Activated naive CD4-positive, alpha-beta T cell treated with anti-CD3 and anti-CD28 coated beads, Interleukin-2, amount 10 ng/mL, durations not matched to agents 7 days and 5 days (primary cell): ENCODE measurements at regions of chr15 and their contacts with region 1.

Region 1: GRCh38 chr15:78108299-78109084 is 16.1 kb downstream of the SH2D7 start:
- DNase-seq: peak; percentile 91
- H3K4me3 Mint-ChIP-seq: no peak overlapping the region
- H3K27ac Mint-ChIP-seq: no peak overlapping the region
- H3K4me1 Mint-ChIP-seq: peaks cover 58% of the 10 kb centered on the region
- H3K27me3 Mint-ChIP-seq: no peaks in the 10 kb centered on the region

Region 2: GRCh38 chr15:77907824-77908751 is 200.4 kb before region 1 on chr15:
- CTCF ChIA-PET with region 1: interaction called, 17 read pairs
- DNase-seq: peak; percentile 81
- H3K4me3 Mint-ChIP-seq: no peak overlapping the region
- H3K27ac Mint-ChIP-seq: no peak overlapping the region
- H3K4me1 Mint-ChIP-seq: peaks cover 3% of the 10 kb centered on the region
- H3K27me3 Mint-ChIP-seq: peaks cover 43% of the 10 kb centered on the region

Region 3: DNA sequence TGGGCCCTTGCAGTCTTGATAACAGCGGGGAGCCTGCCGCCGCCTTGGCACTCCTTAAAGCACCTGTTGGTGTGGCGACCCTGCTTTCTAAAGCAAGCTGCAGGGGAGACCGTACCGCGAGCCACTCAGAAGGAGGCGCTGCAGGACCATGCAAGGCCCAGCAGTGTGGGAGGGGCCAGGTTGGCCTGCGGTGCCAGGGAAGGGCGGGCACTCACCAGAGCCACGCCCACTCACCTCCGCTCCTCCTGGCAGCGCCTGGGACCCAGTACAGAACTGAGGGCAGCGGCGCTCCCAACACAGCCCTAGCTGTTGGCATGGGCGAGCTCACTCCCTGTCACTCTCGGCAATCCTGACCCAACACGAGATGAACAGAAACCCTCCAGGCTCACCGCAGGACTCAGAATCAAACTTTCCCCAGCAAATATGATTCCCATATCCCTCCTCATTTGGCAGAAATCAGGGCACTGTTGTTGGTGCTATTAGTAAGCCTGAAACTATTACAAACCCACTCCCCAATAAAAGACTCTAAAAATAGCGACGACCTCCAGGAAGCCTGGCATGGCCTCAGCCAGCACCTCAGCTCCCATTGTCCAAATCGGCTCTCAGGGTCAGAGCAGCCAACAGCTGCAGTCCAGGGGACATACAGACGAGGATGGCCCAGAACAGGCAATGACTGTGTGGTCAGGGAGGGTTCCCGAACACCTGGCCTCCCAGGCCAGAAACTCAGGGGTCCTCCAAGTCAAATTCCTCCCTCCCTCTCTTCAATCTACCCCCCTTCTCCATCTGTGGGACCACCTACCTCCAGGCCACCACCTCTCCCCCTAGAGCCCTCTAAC is 108.2 kb before region 1 on chr15:
- CTCF ChIA-PET with region 1: interaction called, 51 read pairs
- DNase-seq: peak; percentile 84
- H3K4me3 Mint-ChIP-seq: no peak overlapping the region
- H3K27ac Mint-ChIP-seq: peak overlapping the region; percentile 12
- H3K4me1 Mint-ChIP-seq: peaks cover 2% of the 10 kb centered on the region
- H3K27me3 Mint-ChIP-seq: no peaks in the 10 kb centered on the region

Region 4: GRCh38 chr15:78034495-78035191 is 73.8 kb before region 1 on chr15:
- CTCF ChIA-PET with region 1: interaction called, 33 read pairs
- DNase-seq: peak; percentile 86
- H3K4me3 Mint-ChIP-seq: peak overlapping the region; percentile 44
- H3K27ac Mint-ChIP-seq: peak overlapping the region; percentile 82
- H3K4me1 Mint-ChIP-seq: peaks cover 80% of the 10 kb centered on the region
- H3K27me3 Mint-ChIP-seq: no peaks in the 10 kb centered on the region

Region 5: GRCh38 chr15:78067328-78068228 is 40.9 kb before region 1 on chr15:
- CTCF ChIA-PET with region 1: interaction called, 35 read pairs
- DNase-seq: no peak
- H3K4me3 Mint-ChIP-seq: peak overlapping the region; percentile 59
- H3K27ac Mint-ChIP-seq: peak overlapping the region; percentile 93
- H3K4me1 Mint-ChIP-seq: peaks cover 16% of the 10 kb centered on the region
- H3K27me3 Mint-ChIP-seq: no peaks in the 10 kb centered on the region

Region 6: GRCh38 chr15:78093242-78094020 is 15.1 kb before region 1 on chr15:
- CTCF ChIA-PET with region 1: interaction called, 13 read pairs
- DNase-seq: no peak
- H3K4me3 Mint-ChIP-seq: no peak overlapping the region
- H3K27ac Mint-ChIP-seq: no peak overlapping the region
- H3K4me1 Mint-ChIP-seq: peaks cover 18% of the 10 kb centered on the region
- H3K27me3 Mint-ChIP-seq: peaks cover 37% of the 10 kb centered on the region

Region 7: GRCh38 chr15:78241007-78241406 is 132.5 kb after region 1 on chr15:
- CTCF ChIA-PET with region 1: interaction called, 89 read pairs
- DNase-seq: peak; percentile 90
- H3K4me3 Mint-ChIP-seq: no peak overlapping the region
- H3K27ac Mint-ChIP-seq: no peak overlapping the region
- H3K4me1 Mint-ChIP-seq: peaks cover 3% of the 10 kb centered on the region
- H3K27me3 Mint-ChIP-seq: peaks cover 52% of the 10 kb centered on the region